ENCODE measurements at regions of chr6 and their contacts with region 1.

Region 1: DNA sequence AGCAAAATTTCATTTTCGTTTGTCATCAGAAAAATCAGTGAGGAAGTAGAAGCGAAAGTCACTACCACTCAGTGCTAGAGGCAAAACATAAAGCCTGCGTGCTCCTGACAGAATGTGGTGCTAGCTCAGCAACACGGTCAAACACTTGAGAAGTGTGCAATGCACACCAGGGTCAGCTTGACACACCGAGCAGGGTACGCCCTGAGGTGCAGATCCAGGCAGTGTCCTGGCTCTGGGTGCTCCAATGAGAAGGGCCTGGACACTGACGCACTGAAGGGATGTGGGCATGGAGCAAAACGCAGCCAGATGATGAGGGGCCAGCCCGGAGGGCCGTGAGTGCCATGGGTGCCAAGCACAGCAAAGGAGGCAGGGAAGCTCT is 5.9 kb downstream of the RNASET2 start:
- DNase-seq: peak in 4 of 14 experiments; percentile 39 to 72 (median 61)
- ATAC-seq: peak; percentile 14
- H3K4me3 ChIP-seq: peak overlapping the region; percentile 34
- H3K4me3 Mint-ChIP-seq: peak overlapping the region; percentile 72
- H3K27ac ChIP-seq: peak overlapping the region; percentile 79 to 88
- H3K27ac Mint-ChIP-seq: peak overlapping the region; percentile 93
- H3K4me1 ChIP-seq: peaks cover 86% of the 10 kb centered on the region
- H3K4me1 Mint-ChIP-seq: peaks cover 63% of the 10 kb centered on the region
- H3K27me3 ChIP-seq: no peaks in the 10 kb centered on the region
- H3K27me3 Mint-ChIP-seq: no peaks in the 10 kb centered on the region
- CTCF ChIP-seq: no peak

Region 2: GRCh38 chr6:166474721-166475565 is 475.5 kb before region 1 on chr6:
- CTCF ChIA-PET with region 1: no interaction called
- POLR2A ChIA-PET with region 1: no interaction called
- intact Hi-C with region 1: no loop called
- DNase-seq: no peak
- ATAC-seq: no peak
- H3K4me3 ChIP-seq: no peak overlapping the region
- H3K4me3 Mint-ChIP-seq: no peak overlapping the region
- H3K27ac ChIP-seq: no peak overlapping the region
- H3K27ac Mint-ChIP-seq: no peak overlapping the region
- H3K4me1 ChIP-seq: peaks cover 8% of the 10 kb centered on the region
- H3K4me1 Mint-ChIP-seq: no peaks in the 10 kb centered on the region
- H3K27me3 ChIP-seq: no peaks in the 10 kb centered on the region
- H3K27me3 Mint-ChIP-seq: no peaks in the 10 kb centered on the region
- CTCF ChIP-seq: no peak

Region 3: GRCh38 chr6:166936079-166936787 is 14.2 kb before region 1 on chr6:
- CTCF ChIA-PET with region 1: interaction called, 5 read pairs
- POLR2A ChIA-PET with region 1: interaction called, 32 read pairs
- intact Hi-C with region 1: no loop called
- DNase-seq: peak in 3 of 14 experiments; percentile 17 to 62 (median 31)
- ATAC-seq: peak; percentile 51
- H3K4me3 ChIP-seq: no peak overlapping the region
- H3K4me3 Mint-ChIP-seq: peak overlapping the region; percentile 30
- H3K27ac ChIP-seq: peak overlapping the region in 1 of 2 donors; percentile 7
- H3K27ac Mint-ChIP-seq: peak overlapping the region; percentile 30
- H3K4me1 ChIP-seq: peaks cover 35% of the 10 kb centered on the region
- H3K4me1 Mint-ChIP-seq: peaks cover 49% of the 10 kb centered on the region
- H3K27me3 ChIP-seq: no peaks in the 10 kb centered on the region
- H3K27me3 Mint-ChIP-seq: no peaks in the 10 kb centered on the region
- CTCF ChIP-seq: no peak

Region 4: DNA sequence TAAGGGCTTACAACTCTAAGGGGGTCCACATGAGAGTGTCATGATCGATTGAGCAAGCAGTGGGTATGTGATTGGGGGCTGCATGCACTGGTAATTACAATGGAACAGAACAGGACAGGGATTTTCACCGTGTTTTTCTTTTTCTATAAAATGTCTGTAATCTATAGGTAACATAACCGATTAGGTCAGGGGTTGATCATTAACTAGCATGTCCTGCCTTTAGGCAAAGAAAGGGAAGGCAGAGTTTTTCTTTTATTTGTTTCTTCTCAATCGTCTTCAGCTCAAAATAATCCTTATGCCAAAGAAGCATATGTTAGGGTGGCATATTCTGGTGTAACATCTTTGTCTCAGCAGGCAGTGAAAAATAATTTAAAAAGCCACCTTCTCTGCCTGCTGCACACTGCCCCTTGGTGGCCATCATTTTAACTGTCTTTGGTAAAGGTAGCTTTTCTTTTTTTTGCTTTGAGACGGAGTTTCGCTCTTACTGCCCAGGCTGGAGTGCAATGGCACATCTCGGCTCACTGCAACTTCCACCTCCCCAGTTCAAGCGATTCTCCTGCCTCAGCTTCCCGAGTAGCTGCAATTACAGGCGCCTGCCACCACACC is 39.1 kb after region 1 on chr6:
- CTCF ChIA-PET with region 1: interaction called, 50 read pairs
- POLR2A ChIA-PET with region 1: interaction called, 20 read pairs
- intact Hi-C with region 1: loop called (anchors 1 to 5 kb)
- DNase-seq: peak in 12 of 14 experiments; percentile 23 to 79 (median 48)
- ATAC-seq: peak; percentile 89
- H3K4me3 ChIP-seq: no peak overlapping the region
- H3K4me3 Mint-ChIP-seq: no peak overlapping the region
- H3K27ac ChIP-seq: no peak overlapping the region
- H3K27ac Mint-ChIP-seq: peak overlapping the region; percentile 39
- H3K4me1 ChIP-seq: peaks cover 5% of the 10 kb centered on the region
- H3K4me1 Mint-ChIP-seq: peaks cover 21% of the 10 kb centered on the region
- H3K27me3 ChIP-seq: no peaks in the 10 kb centered on the region
- H3K27me3 Mint-ChIP-seq: no peaks in the 10 kb centered on the region
- CTCF ChIP-seq: peak; percentile 44

Region 5: DNA sequence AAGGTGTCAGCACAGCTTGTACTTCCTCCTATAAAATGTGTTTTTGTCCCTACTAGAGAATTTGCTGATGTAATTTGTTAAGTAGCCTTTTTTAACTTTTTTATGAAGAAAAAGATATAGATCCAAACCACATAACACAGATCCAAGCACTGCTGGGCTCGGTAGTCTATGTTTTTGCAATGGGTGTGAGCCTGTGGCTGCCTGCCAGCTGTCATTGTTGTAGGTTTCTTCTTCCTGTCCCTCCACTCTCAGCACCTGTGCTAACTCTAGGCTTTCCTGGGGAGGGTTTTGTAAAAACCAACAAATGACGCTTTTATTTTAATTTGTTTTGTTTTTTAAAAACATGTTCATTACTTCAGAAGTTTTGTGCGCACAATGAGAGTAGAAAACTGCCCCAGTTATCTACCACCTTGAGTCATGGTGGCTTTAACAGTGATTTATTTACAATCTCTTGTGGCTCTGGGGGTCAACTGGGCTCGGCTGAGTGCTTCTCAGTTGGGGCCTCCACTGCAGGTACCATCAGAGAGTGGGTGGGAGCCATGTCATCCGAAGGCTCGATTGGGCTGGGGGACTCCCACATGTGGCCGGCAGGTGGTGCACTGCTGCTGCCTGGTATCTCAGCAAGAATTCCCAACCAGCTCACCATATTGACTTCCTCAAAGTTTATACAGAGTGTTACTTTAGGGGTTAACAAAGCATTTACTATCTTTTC is 169.4 kb after region 1 on chr6:
- CTCF ChIA-PET with region 1: no interaction called
- POLR2A ChIA-PET with region 1: no interaction called
- intact Hi-C with region 1: loop called (anchors 5 kb)
- DNase-seq: peak; percentile 40 to 85 (median 60)
- ATAC-seq: peak; percentile 92
- H3K4me3 ChIP-seq: no peak overlapping the region
- H3K4me3 Mint-ChIP-seq: peak overlapping the region; percentile 32
- H3K27ac ChIP-seq: peak overlapping the region; percentile 51 to 73
- H3K27ac Mint-ChIP-seq: peak overlapping the region; percentile 95
- H3K4me1 ChIP-seq: peaks cover 84% of the 10 kb centered on the region
- H3K4me1 Mint-ChIP-seq: peaks cover 66% of the 10 kb centered on the region
- H3K27me3 ChIP-seq: no peaks in the 10 kb centered on the region
- H3K27me3 Mint-ChIP-seq: no peaks in the 10 kb centered on the region
- CTCF ChIP-seq: no peak